ENCODE measurements at regions of chr18 and their contacts with region 1.

Region 1: DNA sequence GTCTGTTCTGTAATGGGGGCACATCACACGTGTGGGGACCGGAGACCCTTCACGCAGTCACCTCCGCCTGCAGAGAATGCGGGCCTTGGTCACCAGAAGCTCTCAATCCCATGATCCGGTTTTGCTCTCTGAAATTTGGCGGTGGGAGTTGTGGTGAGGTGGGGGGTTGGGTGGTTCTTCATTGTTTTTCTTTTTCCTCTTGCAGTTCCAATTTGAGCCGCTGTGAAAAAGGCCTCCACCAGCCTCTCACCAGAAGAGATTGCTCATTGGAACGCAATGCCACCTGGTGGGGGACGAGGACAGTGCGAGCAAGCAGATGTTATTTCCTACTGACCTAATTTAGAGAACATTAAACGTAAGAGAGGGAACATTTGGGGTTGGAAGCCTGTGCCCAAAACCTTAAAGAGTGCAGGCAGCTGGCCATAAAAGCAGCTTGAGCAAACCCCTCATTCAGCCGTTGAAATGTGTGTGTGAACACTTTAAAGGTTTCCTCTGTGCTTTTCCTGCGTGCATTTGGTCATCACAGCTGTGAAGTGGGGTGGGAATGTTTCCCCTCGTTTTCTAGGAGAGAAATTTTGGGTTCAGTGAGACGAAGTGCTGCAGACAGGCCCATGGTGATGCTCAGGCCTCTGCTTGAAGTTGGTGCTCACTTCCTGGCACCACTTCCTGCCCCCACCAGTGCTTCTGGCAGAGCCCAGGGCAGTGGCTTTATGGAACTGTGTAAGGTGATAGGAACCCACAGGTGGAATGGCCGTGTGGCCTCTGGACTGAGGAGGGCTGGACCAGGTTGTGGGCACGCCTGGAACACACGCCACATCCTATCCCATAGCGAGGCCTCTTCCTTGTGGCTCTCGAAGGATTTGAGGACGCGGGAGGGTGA is 61.7 kb downstream of the ZCCHC2 start:
- DNase-seq: peak; percentile 88
- H3K4me3 ChIP-seq: no peak overlapping the region
- H3K27ac ChIP-seq: peak overlapping the region; percentile 3 to 45 (median 14)
- H3K4me1 ChIP-seq: peaks cover 4 to 22% (median 5%) of the 10 kb centered on the region in 4 donors
- H3K27me3 ChIP-seq: no peaks in the 10 kb centered on the region
- CTCF ChIP-seq: peak; percentile 97 to 100 (median 98)
- EP300 ChIP-seq: no peak
- POLR2A ChIP-seq: no peak

Region 2: GRCh38 chr18:62729487-62730386 is 145.3 kb after region 1 on chr18:
- in situ Hi-C with region 1: no loop called
- intact Hi-C with region 1: no loop called
- DNase-seq: no peak
- H3K4me3 ChIP-seq: no peak overlapping the region
- H3K27ac ChIP-seq: no peak overlapping the region
- H3K4me1 ChIP-seq: peaks cover 0 to 5% (median 0%) of the 10 kb centered on the region in 4 donors
- H3K27me3 ChIP-seq: no peaks in the 10 kb centered on the region
- CTCF ChIP-seq: no peak
- EP300 ChIP-seq: no peak
- POLR2A ChIP-seq: no peak

Region 3: DNA sequence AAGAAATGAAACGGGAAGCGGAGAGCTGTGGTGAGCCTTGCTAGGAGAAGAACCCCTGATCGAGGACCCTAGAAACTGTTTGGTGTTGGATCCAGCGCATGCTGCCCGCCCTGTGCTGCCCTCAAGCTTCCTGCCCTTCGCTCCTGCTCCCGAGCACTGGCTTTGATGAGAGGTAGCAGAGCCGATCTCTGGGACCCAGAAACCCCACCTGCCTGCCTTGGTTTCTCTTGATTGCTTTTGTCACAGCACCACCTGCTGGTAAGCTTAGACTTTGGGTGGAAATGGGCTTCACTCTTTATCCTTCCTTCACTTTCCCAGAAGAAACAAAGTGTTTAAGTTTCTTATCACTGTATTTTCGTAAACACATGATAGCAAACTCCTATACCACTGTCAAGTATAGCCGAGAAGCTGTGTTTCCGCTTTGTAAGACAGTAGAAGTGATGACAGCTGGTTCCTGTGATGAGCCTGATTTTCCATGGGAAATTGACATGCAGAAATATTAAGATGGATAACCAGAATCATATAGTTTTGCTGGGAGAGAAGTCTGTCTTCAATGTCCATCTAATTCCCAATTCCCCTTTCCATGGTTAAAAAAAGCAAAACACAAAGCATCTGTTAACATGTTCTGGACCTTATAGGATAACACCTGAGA is 398.2 kb after region 1 on chr18:
- in situ Hi-C with region 1: loop called in 2 of 4 experiments (anchors 10 to 25 kb)
- intact Hi-C with region 1: loop called (anchors 5 kb)
- DNase-seq: peak; percentile 44
- H3K4me3 ChIP-seq: peak overlapping the region in 2 of 4 donors; percentile 19 to 24
- H3K27ac ChIP-seq: no peak overlapping the region
- H3K4me1 ChIP-seq: peaks cover 0 to 4% (median 3%) of the 10 kb centered on the region in 4 donors
- H3K27me3 ChIP-seq: no peaks in the 10 kb centered on the region
- CTCF ChIP-seq: peak; percentile 71 to 79 (median 73)
- EP300 ChIP-seq: no peak
- POLR2A ChIP-seq: no peak

Measured in transverse colon (tissue), 4 donors.